Endothelial cell of umbilical vein (primary cell): ENCODE measurements at regions of chr2 and their contacts with region 1.

Region 1: GRCh38 chr2:74391580-74392448 is 11.7 kb upstream of the DCTN1 start:
- DNase-seq: peak; percentile 95
- H3K4me3 ChIP-seq: peak overlapping the region; percentile 94 to 97 (median 96)
- H3K27ac ChIP-seq: peak overlapping the region; percentile 87
- H3K4me1 ChIP-seq: peaks cover 12% of the 10 kb centered on the region
- H3K27me3 ChIP-seq: no peaks in the 10 kb centered on the region
- CTCF ChIP-seq: peak; percentile 92 to 99
- POLR2A ChIP-seq: peak; percentile 54

Region 2: GRCh38 chr2:73897240-73897583 is 494.6 kb before region 1 on chr2:
- CTCF ChIA-PET with region 1: no interaction called
- POLR2A ChIA-PET with region 1: no interaction called
- dilution Hi-C with region 1: no loop called
- intact Hi-C with region 1: no loop called
- DNase-seq: no peak
- H3K4me3 ChIP-seq: no peak overlapping the region
- H3K27ac ChIP-seq: no peak overlapping the region
- H3K4me1 ChIP-seq: no peaks in the 10 kb centered on the region
- H3K27me3 ChIP-seq: peaks cover 5 to 6% of the 10 kb centered on the region in 2 experiments
- CTCF ChIP-seq: no peak
- POLR2A ChIP-seq: no peak

Region 3: GRCh38 chr2:74379851-74380789 is 11.7 kb before region 1 on chr2 and contains the start of gene DCTN1:
- CTCF ChIA-PET with region 1: interaction called, 15 read pairs
- POLR2A ChIA-PET with region 1: interaction called, 6 read pairs
- dilution Hi-C with region 1: no loop called
- intact Hi-C with region 1: no loop called
- DNase-seq: peak; percentile 30
- H3K4me3 ChIP-seq: no peak within 1 kb of the TSS
- H3K27ac ChIP-seq: no peak within 1 kb of the TSS
- H3K4me1 ChIP-seq: peaks cover 5% of the 10 kb centered on the region
- H3K27me3 ChIP-seq: no peaks in the 10 kb centered on the region
- CTCF ChIP-seq: no peak
- POLR2A ChIP-seq: no peak
- total RNA-seq, gene DCTN1: 165 and 170 TPM in 2 replicates

Region 4: DNA sequence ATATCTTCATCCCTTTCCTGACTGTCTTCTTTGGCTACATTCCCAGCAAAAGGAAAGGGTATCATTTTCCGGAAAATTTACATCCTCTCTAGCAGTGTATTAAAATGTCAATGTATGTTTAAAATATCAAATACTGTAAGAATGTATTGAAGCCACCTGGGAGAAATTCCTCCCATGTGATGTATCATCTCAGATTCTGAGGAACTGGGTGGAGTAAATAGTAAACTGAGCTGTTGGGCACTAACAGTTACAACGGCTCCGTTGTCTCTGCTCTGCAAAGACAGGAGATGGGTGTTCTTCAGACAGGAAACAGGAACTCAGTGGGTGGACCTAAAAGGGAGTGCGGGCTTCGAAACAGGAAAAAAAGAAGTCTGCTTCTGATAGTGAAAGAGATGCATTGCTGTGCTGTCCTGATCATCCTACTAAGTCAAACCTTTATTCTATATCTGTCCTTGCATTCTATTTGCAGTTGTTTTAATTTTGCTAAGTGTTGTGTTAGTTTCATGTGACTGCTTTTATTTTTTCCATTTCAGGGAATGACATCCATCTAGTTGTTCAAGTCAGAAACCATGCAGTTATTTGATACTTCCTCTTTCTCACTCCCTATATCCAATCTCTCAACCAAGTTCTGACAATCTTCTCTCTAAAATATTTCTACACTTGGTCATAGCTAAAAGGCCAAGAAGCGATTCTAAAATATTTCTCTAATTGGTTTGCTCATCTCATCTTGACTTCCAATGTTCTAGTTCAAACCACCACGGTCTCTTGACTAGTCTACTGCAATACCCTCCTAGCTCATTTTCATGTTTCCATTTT is 182.1 kb after region 1 on chr2:
- CTCF ChIA-PET with region 1: no interaction called
- POLR2A ChIA-PET with region 1: no interaction called
- dilution Hi-C with region 1: no loop called
- intact Hi-C with region 1: no loop called
- DNase-seq: peak; percentile 24
- H3K4me3 ChIP-seq: peak overlapping the region in 1 of 3 experiments; percentile 49
- H3K27ac ChIP-seq: no peak overlapping the region
- H3K4me1 ChIP-seq: peaks cover 7% of the 10 kb centered on the region
- H3K27me3 ChIP-seq: peaks cover 2 to 3% of the 10 kb centered on the region in 2 experiments
- CTCF ChIP-seq: no peak
- POLR2A ChIP-seq: no peak